ENCODE measurements at regions of chr17 and their contacts with region 1.

Region 1: GRCh38 chr17:28896884-28897768 is at the start of gene FLOT2:
- DNase-seq: peak; percentile 94
- total RNA-seq, gene FLOT2: 80.4 TPM

Region 2: DNA sequence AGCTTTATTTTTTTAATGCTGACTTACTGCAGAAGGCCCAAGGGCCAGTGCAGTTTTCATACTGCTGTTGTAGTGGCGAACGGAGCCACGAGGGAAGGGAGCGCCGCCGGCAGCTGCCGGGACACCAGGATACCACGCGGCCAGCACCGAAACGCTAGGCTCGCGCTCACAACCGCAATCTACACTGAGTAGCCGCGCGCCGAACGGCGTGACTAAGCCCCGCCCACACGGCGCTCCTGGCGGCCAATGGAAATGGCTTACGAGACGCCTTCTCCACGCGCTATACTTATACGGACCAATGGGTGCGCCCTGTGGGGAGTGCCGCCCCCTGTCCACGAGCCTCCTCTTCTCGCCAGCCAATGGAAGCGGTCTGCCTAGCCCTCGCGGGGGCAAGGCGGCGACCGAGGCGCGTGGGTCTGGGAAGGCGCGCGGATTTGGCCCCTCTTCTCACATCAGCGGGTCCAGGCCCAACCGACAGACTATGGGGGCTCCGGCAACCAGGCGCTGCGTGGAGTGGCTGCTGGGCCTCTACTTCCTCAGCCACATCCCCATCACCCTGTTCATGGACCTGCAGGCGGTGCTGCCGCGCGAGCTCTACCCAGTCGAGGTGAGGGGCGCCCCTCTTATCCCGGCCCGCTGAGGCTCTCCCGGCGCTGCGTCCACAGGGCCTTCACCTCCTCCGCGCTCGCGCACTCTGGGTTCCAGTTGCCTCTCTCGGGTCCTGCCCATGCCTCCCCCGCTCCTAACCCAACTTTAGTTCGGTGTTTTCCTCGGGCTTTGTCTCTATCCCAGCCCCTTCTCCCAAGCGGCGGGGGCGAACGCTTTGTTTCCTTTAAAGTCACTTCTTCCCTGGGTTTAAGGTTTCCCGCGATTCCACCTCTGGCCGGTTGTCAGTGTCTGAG is 578.1 kb before region 1 on chr17 and contains the start of gene TMEM97:
- intact Hi-C with region 1: no loop called
- DNase-seq: peak; percentile 96
- total RNA-seq, gene TMEM97: 3.9 TPM

Region 3: GRCh38 chr17:28842282-28843012 is 54.7 kb before region 1 on chr17 and contains the start of gene FAM222B:
- intact Hi-C with region 1: loop called (anchors 5 kb)
- DNase-seq: peak; percentile 90
- total RNA-seq, gene FAM222B: 18.6 TPM

Region 4: DNA sequence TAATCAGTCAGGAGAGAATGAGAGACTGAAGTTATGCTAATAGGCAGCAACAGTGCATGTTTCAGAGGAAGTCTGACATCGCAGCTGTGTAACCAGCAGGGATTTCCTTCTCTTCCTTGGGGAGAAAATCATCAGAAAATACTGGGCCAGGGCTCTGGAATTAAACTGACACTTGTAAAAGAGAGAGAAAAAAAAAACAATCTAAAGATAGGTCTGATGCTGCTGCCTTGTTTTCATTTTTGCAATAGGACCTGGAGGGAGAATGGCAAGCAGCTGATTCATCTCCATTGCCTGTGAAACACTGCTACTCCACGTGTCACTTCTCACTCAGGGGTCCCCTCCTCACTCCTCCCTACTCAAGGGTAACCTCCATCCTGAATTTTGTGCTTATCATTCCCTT is 743.3 kb after region 1 on chr17:
- intact Hi-C with region 1: no loop called
- DNase-seq: no peak

Measured in cardiac septum (tissue), 1 donor.